ENCODE measurements at regions of chr18 and their contacts with region 1.

Region 1: GRCh38 chr18:77132371-77133050 is at the start of gene MBP:
- DNase-seq: no peak
- H3K4me3 ChIP-seq: peak within 1 kb of the TSS; percentile 44 to 48 (median 46)
- H3K27ac ChIP-seq: no peak within 1 kb of the TSS
- H3K4me1 ChIP-seq: peaks cover 13% of the 10 kb centered on the region
- H3K27me3 ChIP-seq: peaks cover 4 to 28% of the 10 kb centered on the region in 2 experiments
- CTCF ChIP-seq: no peak
- POLR2A ChIP-seq: no peak
- total RNA-seq, gene MBP: 1.7 and 4.0 TPM in 2 replicates

Region 2: GRCh38 chr18:76922107-76922506 is 210.4 kb before region 1 on chr18:
- CTCF ChIA-PET with region 1: no interaction called
- POLR2A ChIA-PET with region 1: no interaction called
- dilution Hi-C with region 1: no loop called
- intact Hi-C with region 1: no loop called
- DNase-seq: peak; percentile 66
- H3K4me3 ChIP-seq: no peak overlapping the region
- H3K27ac ChIP-seq: no peak overlapping the region
- H3K4me1 ChIP-seq: no peaks in the 10 kb centered on the region
- H3K27me3 ChIP-seq: no peaks in the 10 kb centered on the region
- CTCF ChIP-seq: peak; percentile 47 to 76
- POLR2A ChIP-seq: no peak

Region 3: DNA sequence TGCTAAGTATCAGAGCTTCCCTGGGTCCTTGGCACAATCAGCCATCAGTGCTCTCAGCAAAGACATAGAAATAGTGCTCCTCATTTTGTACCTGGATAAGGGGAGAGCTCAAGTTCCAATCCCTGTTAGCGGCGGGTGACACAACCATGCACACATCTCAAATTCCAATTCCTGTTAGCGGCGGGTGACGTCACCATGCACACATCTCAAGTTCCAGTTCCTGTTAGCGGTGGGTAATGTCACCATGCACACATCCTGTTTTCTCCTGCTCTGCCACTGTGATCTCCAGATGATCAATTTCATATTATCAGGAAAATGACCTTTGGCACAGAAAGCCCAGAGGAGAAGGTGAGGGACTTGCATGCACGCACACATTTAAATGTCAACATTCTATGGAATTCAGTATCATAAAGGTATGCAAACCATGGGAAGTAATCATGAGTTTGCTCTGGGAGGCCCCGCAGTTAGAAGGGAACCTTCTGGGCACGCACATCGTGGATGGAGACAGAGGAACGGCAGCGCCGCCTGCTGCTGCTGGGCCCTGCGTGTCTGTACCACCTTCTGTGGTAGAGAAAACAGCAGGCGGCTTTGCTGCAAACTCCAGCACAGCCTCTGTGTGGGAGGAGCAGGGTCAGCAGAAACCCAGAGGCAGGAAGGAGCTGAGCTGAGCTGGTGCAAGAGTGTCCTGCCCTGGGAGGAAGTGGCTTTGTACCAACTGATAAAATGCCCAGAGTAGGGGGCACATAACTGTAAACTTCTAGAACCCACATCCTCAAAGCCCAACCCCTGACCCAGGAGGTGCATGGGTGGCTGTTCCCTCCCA is 77.7 kb before region 1 on chr18:
- CTCF ChIA-PET with region 1: interaction called, 3 read pairs
- POLR2A ChIA-PET with region 1: no interaction called
- dilution Hi-C with region 1: no loop called
- intact Hi-C with region 1: loop called (anchors 2 kb)
- DNase-seq: peak; percentile 88
- H3K4me3 ChIP-seq: peak overlapping the region in 1 of 3 experiments; percentile 17
- H3K27ac ChIP-seq: peak overlapping the region; percentile 37
- H3K4me1 ChIP-seq: peaks cover 22% of the 10 kb centered on the region
- H3K27me3 ChIP-seq: no peaks in the 10 kb centered on the region
- CTCF ChIP-seq: peak; percentile 64 to 84
- POLR2A ChIP-seq: no peak